Activated CD4-positive, alpha-beta memory T cell treated with anti-CD3 and anti-CD28 coated beads for 36 hours (primary cell): ENCODE measurements at regions of chr1 and their contacts with region 1.

Region 1: GRCh38 chr1:246497331-246497915 is 9.7 kb downstream of the SMYD3 start:
- DNase-seq: no peak
- H3K4me3 Mint-ChIP-seq: no peak overlapping the region
- H3K27ac Mint-ChIP-seq: no peak overlapping the region
- H3K4me1 Mint-ChIP-seq: peaks cover 9% of the 10 kb centered on the region
- H3K27me3 Mint-ChIP-seq: no peaks in the 10 kb centered on the region

Region 2: GRCh38 chr1:246012341-246012740 is 485.1 kb before region 1 on chr1:
- CTCF ChIA-PET with region 1: interaction called, 4 read pairs
- POLR2A ChIA-PET with region 1: no interaction called
- intact Hi-C with region 1: loop called (anchors 1 kb)
- DNase-seq: no peak
- H3K4me3 Mint-ChIP-seq: no peak overlapping the region
- H3K27ac Mint-ChIP-seq: no peak overlapping the region
- H3K4me1 Mint-ChIP-seq: no peaks in the 10 kb centered on the region
- H3K27me3 Mint-ChIP-seq: no peaks in the 10 kb centered on the region

Region 3: DNA sequence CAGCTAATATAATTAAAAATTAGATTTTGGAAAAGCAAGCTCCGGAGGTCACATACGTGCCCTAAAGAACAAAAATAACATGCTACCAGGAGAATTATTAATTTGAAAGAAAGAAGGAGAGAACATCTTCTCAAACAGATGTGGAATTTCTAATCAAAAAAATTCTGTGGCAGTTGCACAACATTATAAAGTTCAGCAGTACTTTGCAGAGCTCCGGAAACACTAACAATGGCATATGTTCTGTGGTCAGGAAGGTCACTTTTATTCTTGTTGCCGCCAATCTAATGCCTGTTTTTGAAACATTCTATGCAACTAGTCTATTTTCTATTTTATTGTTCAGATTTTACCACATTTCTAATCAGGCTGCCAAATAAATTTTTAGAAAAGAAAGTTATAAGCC is 177.1 kb before region 1 on chr1:
- CTCF ChIA-PET with region 1: no interaction called
- POLR2A ChIA-PET with region 1: no interaction called
- intact Hi-C with region 1: no loop called
- DNase-seq: no peak
- H3K4me3 Mint-ChIP-seq: no peak overlapping the region
- H3K27ac Mint-ChIP-seq: no peak overlapping the region
- H3K4me1 Mint-ChIP-seq: no peaks in the 10 kb centered on the region
- H3K27me3 Mint-ChIP-seq: no peaks in the 10 kb centered on the region

Region 4: GRCh38 chr1:246476771-246477170 is 20.7 kb before region 1 on chr1:
- CTCF ChIA-PET with region 1: no interaction called
- POLR2A ChIA-PET with region 1: no interaction called
- intact Hi-C with region 1: loop called (anchors 2 kb)
- DNase-seq: no peak
- H3K4me3 Mint-ChIP-seq: no peak overlapping the region
- H3K27ac Mint-ChIP-seq: no peak overlapping the region
- H3K4me1 Mint-ChIP-seq: peaks cover 22% of the 10 kb centered on the region
- H3K27me3 Mint-ChIP-seq: no peaks in the 10 kb centered on the region

Region 5: GRCh38 chr1:246532519-246532918 is 35.1 kb after region 1 on chr1:
- CTCF ChIA-PET with region 1: interaction called, 13 read pairs
- POLR2A ChIA-PET with region 1: no interaction called
- intact Hi-C with region 1: loop called (anchors 1 kb)
- DNase-seq: no peak
- H3K4me3 Mint-ChIP-seq: no peak overlapping the region
- H3K27ac Mint-ChIP-seq: no peak overlapping the region
- H3K4me1 Mint-ChIP-seq: peaks cover under 1% of the 10 kb centered on the region
- H3K27me3 Mint-ChIP-seq: no peaks in the 10 kb centered on the region

Region 6: DNA sequence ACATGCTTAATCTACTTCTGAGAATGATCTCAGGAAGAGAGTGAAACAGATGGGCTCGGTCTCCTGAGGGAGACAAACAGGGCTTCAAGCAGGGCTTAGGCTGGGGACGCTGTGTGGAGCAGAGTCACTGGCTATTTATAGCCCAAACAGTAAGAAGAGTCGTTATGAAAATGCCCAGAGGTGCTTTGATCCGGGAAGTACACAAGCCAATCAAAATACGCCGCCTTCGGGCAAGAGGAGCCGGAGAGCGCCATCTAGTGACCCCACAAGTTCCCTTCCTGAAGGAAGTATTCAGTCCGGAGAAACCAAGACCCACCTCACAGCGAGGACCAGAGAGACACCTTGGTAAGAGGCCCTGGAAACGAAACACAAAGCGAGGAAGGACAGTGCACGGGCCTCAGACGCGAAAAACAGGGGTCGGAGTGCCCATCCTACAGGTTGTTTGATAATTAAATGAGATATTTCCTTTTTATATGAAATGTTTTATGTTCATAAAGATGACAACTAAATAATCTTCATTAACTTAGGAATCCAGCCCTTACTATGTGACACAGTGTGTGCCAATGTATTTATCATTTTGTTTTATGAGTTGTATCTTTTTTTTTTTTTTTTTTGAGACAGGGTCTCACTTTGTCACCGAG is 201.8 kb after region 1 on chr1:
- CTCF ChIA-PET with region 1: interaction called, 6 read pairs
- POLR2A ChIA-PET with region 1: no interaction called
- intact Hi-C with region 1: loop called (anchors 1 kb)
- DNase-seq: peak; percentile 92
- H3K4me3 Mint-ChIP-seq: peak overlapping the region; percentile 49
- H3K27ac Mint-ChIP-seq: no peak overlapping the region
- H3K4me1 Mint-ChIP-seq: peaks cover 6% of the 10 kb centered on the region
- H3K27me3 Mint-ChIP-seq: no peaks in the 10 kb centered on the region

Region 7: GRCh38 chr1:246753670-246754535 is 256.5 kb after region 1 on chr1:
- CTCF ChIA-PET with region 1: interaction called, 4 read pairs
- POLR2A ChIA-PET with region 1: no interaction called
- intact Hi-C with region 1: loop called (anchors 1 kb)
- DNase-seq: peak; percentile 71
- H3K4me3 Mint-ChIP-seq: no peak overlapping the region
- H3K27ac Mint-ChIP-seq: no peak overlapping the region
- H3K4me1 Mint-ChIP-seq: no peaks in the 10 kb centered on the region
- H3K27me3 Mint-ChIP-seq: no peaks in the 10 kb centered on the region